T-cell (primary cell): ENCODE measurements at regions of chr19 and their contacts with region 1.

Region 1: DNA sequence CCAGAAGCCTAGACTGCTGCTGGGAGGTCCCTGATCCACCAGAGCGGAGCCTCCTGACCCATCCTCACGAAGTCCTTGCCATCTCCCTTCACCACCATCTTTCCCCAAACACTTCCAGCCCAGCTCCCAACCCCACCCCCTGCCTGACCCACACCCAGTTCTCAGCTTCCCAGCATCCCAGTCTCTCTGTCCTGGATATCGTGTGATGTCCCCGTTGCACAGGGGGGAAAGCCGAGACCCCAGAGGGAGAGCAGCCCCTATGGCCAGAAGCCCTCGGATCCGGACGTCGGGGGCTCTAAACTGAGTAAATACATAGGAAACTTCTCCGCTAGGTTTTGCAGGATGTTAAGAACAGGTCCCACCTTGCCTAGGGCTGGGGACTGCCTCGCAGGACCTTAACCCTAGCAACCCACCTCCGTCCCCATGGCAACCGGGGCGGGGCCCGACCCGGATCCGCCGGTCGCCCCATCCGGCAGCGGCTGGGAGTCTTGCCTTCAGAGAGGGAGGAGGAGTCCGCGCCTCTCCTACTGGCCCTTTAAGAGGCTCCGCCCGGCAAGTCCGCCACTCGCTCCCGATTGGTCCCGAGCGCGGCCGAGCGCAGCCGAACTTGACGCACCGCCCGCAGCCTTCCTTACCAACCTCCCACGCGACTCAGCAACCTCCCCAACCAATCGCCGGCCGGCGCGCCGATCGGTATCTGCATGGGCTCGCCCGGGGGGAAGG is 451 bp upstream of the HMG20B start:
- DNase-seq: peak; percentile 97 to 100 (median 99)
- ATAC-seq: peak; percentile 93 to 97 (median 96)
- H3K4me3 ChIP-seq: peak overlapping the region; percentile 51
- H3K4me3 Mint-ChIP-seq: peak overlapping the region; percentile 62 to 79 (median 77)
- H3K27ac ChIP-seq: peak overlapping the region; percentile 66
- H3K27ac Mint-ChIP-seq: peak overlapping the region; percentile 11 to 25
- H3K4me1 ChIP-seq: peaks cover 8 to 22% of the 10 kb centered on the region in 2 experiments
- H3K4me1 Mint-ChIP-seq: peaks cover 14 to 21% (median 18%) of the 10 kb centered on the region in 3 donors
- H3K27me3 ChIP-seq: no peaks in the 10 kb centered on the region
- H3K27me3 Mint-ChIP-seq: no peaks in the 10 kb centered on the region

Region 2: DNA sequence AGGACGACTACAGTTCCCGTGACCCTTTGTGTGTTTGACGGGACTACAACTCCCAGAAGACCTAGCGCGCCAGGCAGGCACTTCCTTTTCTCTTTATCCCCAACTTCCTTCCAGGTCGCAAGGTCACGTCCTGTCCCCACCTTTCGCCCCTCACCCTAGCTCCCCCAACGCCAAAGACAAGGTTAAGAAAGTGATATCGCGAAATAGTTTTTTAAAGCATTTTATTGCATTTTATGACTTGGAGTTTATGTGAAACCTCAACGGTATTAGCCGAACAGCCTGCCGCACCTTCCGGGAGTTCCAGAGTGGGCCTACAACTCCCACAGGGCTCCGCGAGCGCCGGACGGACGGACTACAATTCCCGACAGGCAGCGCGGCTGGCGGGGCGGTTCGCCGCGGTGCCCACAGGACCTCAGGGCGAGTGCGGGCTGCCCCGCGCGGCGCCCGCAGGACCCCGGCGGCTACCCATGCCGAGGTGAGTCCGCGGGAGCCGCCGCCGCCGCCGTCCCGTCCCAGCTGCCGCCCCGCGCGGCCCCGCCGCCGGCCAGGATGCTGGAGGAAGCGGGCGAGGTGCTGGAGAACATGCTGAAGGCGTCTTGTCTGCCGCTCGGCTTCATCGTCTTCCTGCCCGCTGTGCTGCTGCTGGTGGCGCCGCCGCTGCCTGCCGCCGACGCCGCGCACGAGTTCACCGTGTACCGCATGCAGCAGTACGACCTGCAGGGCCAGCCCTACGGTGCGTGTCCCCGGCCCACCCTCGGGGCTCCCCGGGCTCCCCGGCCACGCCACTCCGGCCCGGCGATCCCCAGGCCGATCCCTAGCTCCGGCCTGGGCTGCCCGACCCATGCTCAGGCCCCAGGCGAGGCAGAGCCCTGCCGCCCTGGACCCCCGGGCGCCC is 386.6 kb before region 1 on chr19 and contains the start of gene NCLN:
- CTCF ChIA-PET with region 1: no interaction called
- POLR2A ChIA-PET with region 1: interaction called in 1 of 2 experiments, 11 read pairs
- DNase-seq: peak; percentile 84 to 96 (median 91)
- ATAC-seq: peak; percentile 80 to 86 (median 84)
- H3K4me3 ChIP-seq: peak within 1 kb of the TSS; percentile 55 to 64
- H3K4me3 Mint-ChIP-seq: peak within 1 kb of the TSS; percentile 86 to 95 (median 89)
- H3K27ac ChIP-seq: peak within 1 kb of the TSS; percentile 54
- H3K27ac Mint-ChIP-seq: peak within 1 kb of the TSS; percentile 88 to 92
- H3K4me1 ChIP-seq: peaks cover 23 to 90% of the 10 kb centered on the region in 2 experiments
- H3K4me1 Mint-ChIP-seq: peaks cover 56 to 64% (median 60%) of the 10 kb centered on the region in 3 donors
- H3K27me3 ChIP-seq: no peaks in the 10 kb centered on the region
- H3K27me3 Mint-ChIP-seq: no peaks in the 10 kb centered on the region
- total RNA-seq, gene NCLN: 47.2 to 69.5 (median 61.0) TPM

Region 3: DNA sequence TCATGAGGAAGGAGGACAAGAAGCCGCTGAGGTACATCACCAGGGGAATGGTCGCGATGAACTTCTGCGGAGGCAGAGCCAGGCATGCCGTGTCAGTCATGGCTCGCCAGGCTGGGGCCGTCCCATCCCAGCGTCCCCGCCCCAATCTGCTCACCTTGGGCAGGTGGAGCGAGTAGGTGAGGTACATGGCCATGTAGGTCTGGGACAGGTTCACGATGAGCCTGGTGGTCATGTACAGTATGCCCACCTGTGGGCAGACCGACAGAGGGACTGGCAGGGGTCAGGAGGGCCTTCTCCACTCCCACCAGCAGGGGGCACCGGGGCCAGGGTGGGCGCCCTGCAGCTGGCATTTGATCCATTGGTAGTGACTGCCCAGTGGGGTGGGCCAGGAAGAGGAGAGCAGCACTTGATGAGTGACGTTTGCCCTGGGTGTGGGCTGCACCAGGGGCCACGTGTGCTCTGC is 25.0 kb before region 1 on chr19:
- CTCF ChIA-PET with region 1: interaction called in 1 of 2 experiments, 4 read pairs
- POLR2A ChIA-PET with region 1: interaction called in 1 of 2 experiments, 10 read pairs
- DNase-seq: peak in 3 of 35 experiments; percentile 26 to 41 (median 31)
- ATAC-seq: peak in 2 of 4 experiments; percentile 21 to 26
- H3K4me3 ChIP-seq: no peak overlapping the region
- H3K4me3 Mint-ChIP-seq: no peak overlapping the region
- H3K27ac ChIP-seq: no peak overlapping the region
- H3K27ac Mint-ChIP-seq: no peak overlapping the region
- H3K4me1 ChIP-seq: peaks cover 0 to 27% of the 10 kb centered on the region in 2 experiments
- H3K4me1 Mint-ChIP-seq: peaks cover 17 to 20% (median 17%) of the 10 kb centered on the region in 3 donors
- H3K27me3 ChIP-seq: no peaks in the 10 kb centered on the region
- H3K27me3 Mint-ChIP-seq: no peaks in the 10 kb centered on the region